ENCODE measurements at regions of chr1 and their contacts with region 1.

Region 1: GRCh38 chr1:165276314-165276713 is 80.2 kb downstream of the LMX1A start:
- DNase-seq: no peak
- H3K4me3 ChIP-seq: no peak overlapping the region
- H3K27ac ChIP-seq: no peak overlapping the region
- H3K4me1 ChIP-seq: no peaks in the 10 kb centered on the region
- H3K27me3 ChIP-seq: no peaks in the 10 kb centered on the region; the same call in 1 of the 2 replicates
- CTCF ChIP-seq: no peak
- EP300 ChIP-seq: no peak
- RAD21 ChIP-seq: no peak

Region 2: DNA sequence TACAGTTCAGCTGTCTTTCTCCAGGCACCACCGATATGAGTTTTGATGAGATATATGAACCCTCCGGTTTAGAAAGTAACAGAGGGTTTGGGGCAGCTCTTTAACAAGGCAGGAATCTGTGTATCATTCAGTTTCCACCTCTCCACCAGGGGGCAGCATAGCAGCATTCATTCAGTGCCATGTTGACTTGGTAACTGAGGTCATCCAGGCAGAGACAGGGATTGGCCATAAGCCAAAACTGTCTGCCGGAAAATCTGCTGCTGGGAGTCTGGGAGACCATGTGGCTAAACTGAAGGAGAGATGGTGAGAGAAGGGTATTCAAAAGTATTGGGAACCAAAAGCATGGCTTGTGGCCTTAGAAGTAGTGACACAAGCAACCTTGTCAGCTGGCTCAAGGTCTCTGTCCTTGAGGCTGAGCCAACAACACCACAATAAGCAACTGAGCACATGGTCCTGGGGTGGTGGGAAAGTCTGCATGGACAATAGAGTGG is 18.3 kb before region 1 on chr1:
- CTCF ChIA-PET with region 1: interaction called, 11 read pairs
- POLR2A ChIA-PET with region 1: no interaction called
- DNase-seq: peak; percentile 63
- H3K4me3 ChIP-seq: peak overlapping the region in 1 of 2 experiments; percentile 47; a peak in 1 of 4 replicates
- H3K27ac ChIP-seq: no peak overlapping the region
- H3K4me1 ChIP-seq: no peaks in the 10 kb centered on the region; a peak in 1 of 4 replicates
- H3K27me3 ChIP-seq: no peaks in the 10 kb centered on the region
- CTCF ChIP-seq: peak; percentile 74
- EP300 ChIP-seq: no peak
- RAD21 ChIP-seq: peak; percentile 59

Measured in SK-N-SH (cell line).